ENCODE measurements at regions of chr5 and their contacts with region 1.

Region 1: DNA sequence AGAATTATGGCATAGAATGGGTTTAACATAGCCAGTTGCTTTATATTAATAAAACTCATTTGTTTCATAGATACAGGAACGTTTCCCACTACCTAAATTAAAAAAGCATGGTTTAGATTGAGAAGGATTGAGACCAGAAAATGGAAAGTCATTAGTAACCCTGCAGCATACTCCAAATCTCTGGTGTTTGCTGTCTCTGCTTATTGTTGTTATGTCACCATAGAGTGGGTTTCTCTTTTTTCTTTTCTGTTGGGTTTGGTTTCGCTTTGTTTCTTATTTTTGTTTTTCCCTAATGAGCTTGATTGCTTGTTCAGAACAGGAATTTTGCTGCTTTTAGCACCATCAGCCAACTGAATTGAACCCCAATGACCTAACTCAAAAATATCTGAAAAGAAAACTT is 1034.8 kb downstream of the MAT2B start:
- DNase-seq: no peak
- ATAC-seq: no peak
- H3K4me3 ChIP-seq: no peak overlapping the region
- H3K27ac ChIP-seq: no peak overlapping the region
- H3K4me1 ChIP-seq: no peaks in the 10 kb centered on the region
- H3K27me3 ChIP-seq: no peaks in the 10 kb centered on the region
- CTCF ChIP-seq: no peak
- EP300 ChIP-seq: no peak
- POLR2A ChIP-seq: no peak
- RAD21 ChIP-seq: no peak

Region 2: GRCh38 chr5:164560216-164560615 is 20.0 kb after region 1 on chr5:
- CTCF ChIA-PET with region 1: no interaction called
- POLR2A ChIA-PET with region 1: no interaction called
- RAD21 ChIA-PET with region 1: no interaction called
- SMC1A ChIA-PET with region 1: interaction called, 11 read pairs
- in situ Hi-C with region 1: no loop called
- intact Hi-C with region 1: no loop called
- DNase-seq: no peak
- ATAC-seq: no peak
- H3K4me3 ChIP-seq: no peak overlapping the region
- H3K27ac ChIP-seq: no peak overlapping the region
- H3K4me1 ChIP-seq: no peaks in the 10 kb centered on the region
- H3K27me3 ChIP-seq: no peaks in the 10 kb centered on the region
- CTCF ChIP-seq: no peak
- EP300 ChIP-seq: no peak
- POLR2A ChIP-seq: no peak
- RAD21 ChIP-seq: no peak

Region 3: GRCh38 chr5:164651546-164652275 is 111.5 kb after region 1 on chr5:
- CTCF ChIA-PET with region 1: no interaction called
- POLR2A ChIA-PET with region 1: no interaction called
- RAD21 ChIA-PET with region 1: no interaction called
- SMC1A ChIA-PET with region 1: no interaction called
- in situ Hi-C with region 1: no loop called
- intact Hi-C with region 1: no loop called
- DNase-seq: no peak
- ATAC-seq: peak; percentile 80
- H3K4me3 ChIP-seq: no peak overlapping the region
- H3K27ac ChIP-seq: no peak overlapping the region
- H3K4me1 ChIP-seq: no peaks in the 10 kb centered on the region
- H3K27me3 ChIP-seq: no peaks in the 10 kb centered on the region
- CTCF ChIP-seq: no peak
- EP300 ChIP-seq: no peak
- POLR2A ChIP-seq: no peak
- RAD21 ChIP-seq: no peak

Region 4: DNA sequence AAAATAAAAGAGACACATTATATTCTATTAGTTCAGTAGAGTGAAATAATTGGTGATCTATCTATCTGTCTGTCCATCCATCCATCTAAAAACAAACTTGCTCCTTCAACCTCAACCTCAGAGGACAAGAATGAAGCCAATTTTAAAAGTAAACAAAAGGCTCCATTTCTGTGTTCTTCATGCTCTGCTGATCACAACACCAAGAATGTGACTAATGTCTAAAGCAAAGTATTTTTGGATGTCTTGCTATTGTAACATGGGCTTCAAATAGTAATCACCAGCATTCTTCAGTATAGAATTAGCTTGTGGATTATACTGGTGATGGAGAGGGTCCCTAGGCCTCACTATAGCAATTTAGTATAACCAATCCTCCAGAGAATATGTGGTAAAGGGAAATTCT is 269.7 kb after region 1 on chr5:
- CTCF ChIA-PET with region 1: no interaction called
- POLR2A ChIA-PET with region 1: no interaction called
- RAD21 ChIA-PET with region 1: no interaction called
- SMC1A ChIA-PET with region 1: no interaction called
- in situ Hi-C with region 1: no loop called
- intact Hi-C with region 1: no loop called
- DNase-seq: no peak
- ATAC-seq: peak; percentile 66
- H3K4me3 ChIP-seq: no peak overlapping the region
- H3K27ac ChIP-seq: no peak overlapping the region
- H3K4me1 ChIP-seq: no peaks in the 10 kb centered on the region
- H3K27me3 ChIP-seq: no peaks in the 10 kb centered on the region
- CTCF ChIP-seq: no peak
- EP300 ChIP-seq: no peak
- POLR2A ChIP-seq: no peak
- RAD21 ChIP-seq: no peak